ENCODE measurements at regions of chrX and their contacts with region 1.

Region 1: DNA sequence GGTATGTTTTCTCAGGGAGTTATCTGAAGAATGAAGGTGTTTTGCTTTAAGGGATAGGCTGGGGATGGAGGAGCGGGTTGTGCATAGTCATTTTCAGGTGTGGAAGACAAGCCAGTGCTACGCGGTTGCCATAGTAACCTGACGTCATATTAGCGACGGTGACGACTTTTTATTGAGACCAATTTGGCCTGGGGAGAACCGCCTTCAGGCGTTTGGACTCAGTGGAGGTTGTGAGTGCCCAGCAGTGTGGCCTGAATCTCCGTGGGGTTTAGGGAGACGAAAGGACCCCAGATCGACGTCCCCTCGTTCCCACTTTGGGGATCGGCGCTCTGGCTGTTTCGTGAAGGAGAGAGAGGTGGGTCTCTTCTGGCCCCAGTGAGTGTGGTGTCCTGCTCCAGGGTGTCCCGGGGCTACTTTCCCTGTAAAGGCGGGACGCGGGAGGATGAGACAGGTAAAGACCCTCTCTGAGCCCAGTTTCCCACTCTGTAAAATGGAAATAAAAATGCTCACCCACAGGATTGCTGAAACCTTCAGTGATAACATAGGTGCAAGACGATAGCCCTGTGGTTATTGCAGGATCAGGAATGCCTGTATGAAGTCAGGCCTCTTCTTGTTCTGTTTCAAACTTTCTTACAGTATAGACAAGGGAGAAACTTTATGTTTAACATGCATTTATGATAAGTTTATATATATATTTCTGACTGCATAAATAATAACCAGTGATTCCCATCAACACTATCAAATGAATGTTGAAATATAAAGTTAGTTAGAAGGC is 48.6 kb downstream of the GPRASP3 start:
- DNase-seq: peak; percentile 41 to 81 (median 72)
- ATAC-seq: peak; percentile 90
- H3K4me3 ChIP-seq: peak overlapping the region; percentile 79
- H3K4me3 Mint-ChIP-seq: peak overlapping the region; percentile 83 to 98 (median 96)
- H3K27ac ChIP-seq: peak overlapping the region; percentile 78
- H3K27ac Mint-ChIP-seq: peak overlapping the region; percentile 72 to 99 (median 97)
- H3K4me1 ChIP-seq: no peaks in the 10 kb centered on the region
- H3K4me1 Mint-ChIP-seq: peaks cover 0 to 19% (median 11%) of the 10 kb centered on the region in 7 donors
- H3K27me3 ChIP-seq: no peaks in the 10 kb centered on the region
- H3K27me3 Mint-ChIP-seq: no peaks in the 10 kb centered on the region

Region 2: GRCh38 chrX:102652031-102652688 is 117.0 kb before region 1 on chrX:
- CTCF ChIA-PET with region 1: no interaction called
- POLR2A ChIA-PET with region 1: no interaction called
- intact Hi-C with region 1: loop called (anchors 5 kb)
- DNase-seq: peak in 8 of 9 donors; percentile 19 to 83 (median 78)
- ATAC-seq: peak; percentile 89
- H3K4me3 ChIP-seq: peak overlapping the region; percentile 83
- H3K4me3 Mint-ChIP-seq: peak overlapping the region; percentile 83 to 100 (median 94)
- H3K27ac ChIP-seq: peak overlapping the region; percentile 88
- H3K27ac Mint-ChIP-seq: peak overlapping the region; percentile 69 to 99 (median 95)
- H3K4me1 ChIP-seq: peaks cover 4 to 5% of the 10 kb centered on the region in 2 donors
- H3K4me1 Mint-ChIP-seq: peaks cover 13 to 48% (median 35%) of the 10 kb centered on the region in 7 donors
- H3K27me3 ChIP-seq: no peaks in the 10 kb centered on the region
- H3K27me3 Mint-ChIP-seq: peaks cover 0 to 9% (median 0%) of the 10 kb centered on the region in 5 donors

Region 3: GRCh38 chrX:102659790-102660757 is 109.1 kb before region 1 on chrX:
- CTCF ChIA-PET with region 1: no interaction called
- POLR2A ChIA-PET with region 1: no interaction called
- intact Hi-C with region 1: loop called in 1 of 2 experiments (anchors 5 kb)
- DNase-seq: peak; percentile 57 to 82 (median 78)
- ATAC-seq: peak; percentile 97
- H3K4me3 ChIP-seq: peak overlapping the region; percentile 58
- H3K4me3 Mint-ChIP-seq: peak overlapping the region; percentile 85 to 94 (median 91)
- H3K27ac ChIP-seq: peak overlapping the region; percentile 73
- H3K27ac Mint-ChIP-seq: peak overlapping the region; percentile 84 to 96 (median 89)
- H3K4me1 ChIP-seq: no peaks in the 10 kb centered on the region
- H3K4me1 Mint-ChIP-seq: peaks cover 17 to 46% (median 39%) of the 10 kb centered on the region in 7 donors
- H3K27me3 ChIP-seq: no peaks in the 10 kb centered on the region
- H3K27me3 Mint-ChIP-seq: peaks cover 0 to 7% (median 0%) of the 10 kb centered on the region in 5 donors

Region 4: DNA sequence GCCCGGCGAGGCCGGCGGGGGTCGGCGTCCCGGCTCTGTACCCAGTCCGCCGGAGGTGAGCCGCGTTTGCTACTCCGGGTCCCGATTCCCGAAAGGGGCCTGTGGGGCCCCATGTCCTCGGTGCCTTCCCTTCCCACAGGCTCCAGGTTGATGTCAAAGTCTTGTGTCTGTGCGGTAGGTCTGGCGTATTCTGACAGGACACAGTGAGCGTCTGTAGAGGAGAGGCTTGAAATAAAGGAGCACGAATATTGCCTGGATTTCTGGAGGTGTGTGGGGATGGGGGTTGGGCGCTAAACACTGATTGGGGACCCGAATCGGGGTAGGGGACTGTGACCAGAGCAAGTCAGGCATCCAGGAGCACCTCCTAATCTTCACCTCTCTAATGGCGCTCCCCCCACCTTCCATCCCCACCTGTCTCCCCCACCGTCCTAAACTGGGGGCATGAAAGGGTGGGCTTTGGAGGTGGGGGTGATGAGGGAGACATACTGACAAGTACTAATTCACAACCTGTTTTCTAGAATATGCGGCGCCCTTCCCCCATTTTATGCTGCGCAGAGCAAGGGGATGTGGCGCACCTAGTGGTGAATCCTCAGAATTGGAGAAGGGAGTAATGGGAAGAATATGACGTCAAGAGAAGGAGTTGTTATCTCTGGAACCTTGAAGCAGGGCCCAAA is 56.1 kb before region 1 on chrX:
- CTCF ChIA-PET with region 1: no interaction called
- POLR2A ChIA-PET with region 1: no interaction called
- intact Hi-C with region 1: loop called in 1 of 2 experiments (anchors 10 kb)
- DNase-seq: peak in 7 of 9 donors; percentile 9 to 33 (median 23)
- ATAC-seq: no peak
- H3K4me3 ChIP-seq: peak overlapping the region; percentile 50
- H3K4me3 Mint-ChIP-seq: peak overlapping the region; percentile 70 to 94 (median 88)
- H3K27ac ChIP-seq: peak overlapping the region; percentile 14
- H3K27ac Mint-ChIP-seq: peak overlapping the region in 6 of 9 donors; percentile 36 to 93 (median 56)
- H3K4me1 ChIP-seq: peaks cover 0 to 8% of the 10 kb centered on the region in 2 donors
- H3K4me1 Mint-ChIP-seq: peaks cover 5 to 36% (median 25%) of the 10 kb centered on the region in 7 donors
- H3K27me3 ChIP-seq: no peaks in the 10 kb centered on the region
- H3K27me3 Mint-ChIP-seq: peaks cover 5 to 31% (median 8%) of the 10 kb centered on the region in 5 donors

Region 5: GRCh38 chrX:102720237-102721168 is 48.7 kb before region 1 on chrX and contains the start of gene GPRASP3:
- CTCF ChIA-PET with region 1: no interaction called
- POLR2A ChIA-PET with region 1: no interaction called
- intact Hi-C with region 1: loop called (anchors 1 to 10 kb)
- DNase-seq: peak; percentile 30 to 76 (median 66)
- ATAC-seq: peak; percentile 97
- H3K4me3 ChIP-seq: peak within 1 kb of the TSS; percentile 66
- H3K4me3 Mint-ChIP-seq: peak within 1 kb of the TSS; percentile 88 to 96 (median 93)
- H3K27ac ChIP-seq: peak within 1 kb of the TSS; percentile 49
- H3K27ac Mint-ChIP-seq: peak within 1 kb of the TSS; percentile 82 to 94 (median 88)
- H3K4me1 ChIP-seq: no peaks in the 10 kb centered on the region
- H3K4me1 Mint-ChIP-seq: peaks cover 4 to 18% (median 15%) of the 10 kb centered on the region in 7 donors
- H3K27me3 ChIP-seq: no peaks in the 10 kb centered on the region
- H3K27me3 Mint-ChIP-seq: no peaks in the 10 kb centered on the region
- total RNA-seq, gene GPRASP3: 1.5 to 3.5 (median 1.9) TPM